ENCODE measurements at regions of chr20 and their contacts with region 1.

Region 1: GRCh38 chr20:63627129-63627750 is 339 bp upstream of the GMEB2 start:
- DNase-seq: peak; percentile 98 to 100
- H3K4me3 ChIP-seq: peak overlapping the region; percentile 91
- H3K4me3 Mint-ChIP-seq: peak overlapping the region; percentile 80
- H3K27ac Mint-ChIP-seq: peak overlapping the region; percentile 80
- H3K4me1 ChIP-seq: peaks cover 18% of the 10 kb centered on the region
- H3K4me1 Mint-ChIP-seq: peaks cover 25% of the 10 kb centered on the region
- H3K27me3 ChIP-seq: no peaks in the 10 kb centered on the region
- H3K27me3 Mint-ChIP-seq: no peaks in the 10 kb centered on the region
- CTCF ChIP-seq: no peak

Region 2: DNA sequence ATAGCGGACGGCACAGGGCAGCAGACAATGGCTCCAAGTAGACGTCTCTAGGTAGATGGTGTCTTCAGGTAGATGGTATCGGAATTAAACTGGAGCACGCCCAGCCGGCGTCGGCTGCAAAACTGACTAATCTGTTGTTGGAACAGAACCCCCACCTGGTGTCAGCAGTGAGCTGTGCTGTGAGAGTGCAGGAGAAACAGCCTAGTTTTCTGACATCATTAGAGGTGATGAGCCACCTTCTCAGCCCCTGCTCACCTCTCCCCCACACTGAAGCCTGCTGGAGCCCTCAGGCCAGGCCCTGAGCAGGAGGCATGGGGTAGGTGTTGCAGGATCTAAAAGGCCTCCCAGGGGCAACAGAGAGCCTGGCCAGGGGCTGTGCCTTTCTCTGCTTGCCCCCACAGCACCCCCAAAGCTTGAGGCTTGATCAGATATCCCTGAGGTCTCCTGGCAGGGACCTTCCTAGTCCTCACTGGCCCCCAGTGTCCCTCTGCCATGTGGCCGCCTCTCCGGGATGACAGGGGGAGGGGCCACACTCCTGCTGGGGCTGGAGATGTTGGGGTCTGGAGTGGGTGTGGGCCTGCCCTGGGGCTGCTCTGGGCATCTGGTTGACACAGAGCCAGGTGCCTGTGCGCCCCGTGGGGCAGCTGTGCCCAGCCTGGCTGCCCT is 46.3 kb before region 1 on chr20:
- CTCF ChIA-PET with region 1: interaction called, 3 read pairs
- POLR2A ChIA-PET with region 1: no interaction called
- intact Hi-C with region 1: loop called (anchors 2 kb)
- DNase-seq: peak; percentile 84 to 86
- H3K4me3 ChIP-seq: no peak overlapping the region
- H3K4me3 Mint-ChIP-seq: no peak overlapping the region
- H3K27ac Mint-ChIP-seq: no peak overlapping the region
- H3K4me1 ChIP-seq: no peaks in the 10 kb centered on the region
- H3K4me1 Mint-ChIP-seq: no peaks in the 10 kb centered on the region
- H3K27me3 ChIP-seq: no peaks in the 10 kb centered on the region
- H3K27me3 Mint-ChIP-seq: peaks cover 3% of the 10 kb centered on the region
- CTCF ChIP-seq: peak; percentile 78 to 92

Region 3: GRCh38 chr20:63657937-63658748 is 30.9 kb after region 1 on chr20 and contains the start of gene RTEL1:
- CTCF ChIA-PET with region 1: interaction called, 6 read pairs
- POLR2A ChIA-PET with region 1: interaction called, 10 read pairs
- intact Hi-C with region 1: loop called (anchors 1 kb)
- DNase-seq: peak; percentile 96 to 99
- H3K4me3 ChIP-seq: peak within 1 kb of the TSS; percentile 82
- H3K4me3 Mint-ChIP-seq: peak within 1 kb of the TSS; percentile 86
- H3K27ac Mint-ChIP-seq: peak within 1 kb of the TSS; percentile 77
- H3K4me1 ChIP-seq: peaks cover 10% of the 10 kb centered on the region
- H3K4me1 Mint-ChIP-seq: peaks cover 15% of the 10 kb centered on the region
- H3K27me3 ChIP-seq: no peaks in the 10 kb centered on the region
- H3K27me3 Mint-ChIP-seq: no peaks in the 10 kb centered on the region
- CTCF ChIP-seq: no peak
- total RNA-seq, gene RTEL1: 51.1 and 61.6 TPM in 2 replicates

Measured in Caco-2 (cell line).